B cell (primary cell): ENCODE measurements at regions of chr1 and their contacts with region 1.

Region 1: DNA sequence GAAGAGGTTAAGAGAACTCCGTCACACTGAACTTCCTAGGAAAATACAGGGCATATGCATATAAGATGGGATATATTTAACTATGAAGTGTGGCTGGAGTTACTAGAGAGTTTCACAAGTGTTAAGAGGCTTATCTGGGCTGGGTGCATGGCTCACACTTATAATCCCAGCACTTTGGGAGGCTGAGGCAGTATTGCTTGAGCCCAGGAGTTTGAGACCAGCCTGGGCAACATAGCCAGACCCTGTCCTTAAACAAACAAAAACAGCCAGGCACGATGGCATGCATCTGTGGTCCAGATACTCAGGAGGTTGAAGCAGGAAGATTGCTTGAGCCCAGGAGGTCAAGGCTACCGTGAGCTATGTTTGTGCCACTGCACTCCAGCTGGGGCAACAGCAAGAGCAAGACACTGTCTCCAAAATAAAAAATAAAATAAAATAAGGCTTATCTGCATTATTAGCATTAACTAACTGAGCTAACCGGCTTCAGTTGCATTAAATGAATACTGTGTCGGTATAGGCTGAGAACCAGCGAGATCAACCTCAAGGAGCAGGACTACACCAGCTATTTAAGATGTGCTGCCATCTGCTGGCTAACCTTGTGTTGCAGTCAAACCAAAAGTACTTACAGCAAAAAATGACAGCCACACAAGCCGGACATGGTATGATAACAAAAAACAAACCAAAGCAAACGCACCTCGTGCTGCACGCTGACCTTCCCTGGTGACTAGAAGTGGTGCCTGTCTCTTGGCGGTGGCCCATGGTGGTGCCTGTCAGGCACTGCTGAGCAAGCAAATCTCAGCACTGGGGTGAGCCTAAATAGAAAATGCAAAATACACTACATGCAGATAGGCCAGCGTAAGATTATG is 19.7 kb upstream of the RBBP5 start:
- DNase-seq: peak; percentile 85
- ATAC-seq: peak; percentile 85
- H3K4me3 ChIP-seq: no peak overlapping the region
- H3K4me3 Mint-ChIP-seq: peak overlapping the region; percentile 50
- H3K27ac ChIP-seq: no peak overlapping the region
- H3K27ac Mint-ChIP-seq: no peak overlapping the region
- H3K4me1 ChIP-seq: peaks cover 15 to 23% of the 10 kb centered on the region in 2 donors
- H3K4me1 Mint-ChIP-seq: peaks cover 28% of the 10 kb centered on the region
- H3K27me3 ChIP-seq: no peaks in the 10 kb centered on the region
- H3K27me3 Mint-ChIP-seq: no peaks in the 10 kb centered on the region
- CTCF ChIP-seq: peak; percentile 85

Region 2: DNA sequence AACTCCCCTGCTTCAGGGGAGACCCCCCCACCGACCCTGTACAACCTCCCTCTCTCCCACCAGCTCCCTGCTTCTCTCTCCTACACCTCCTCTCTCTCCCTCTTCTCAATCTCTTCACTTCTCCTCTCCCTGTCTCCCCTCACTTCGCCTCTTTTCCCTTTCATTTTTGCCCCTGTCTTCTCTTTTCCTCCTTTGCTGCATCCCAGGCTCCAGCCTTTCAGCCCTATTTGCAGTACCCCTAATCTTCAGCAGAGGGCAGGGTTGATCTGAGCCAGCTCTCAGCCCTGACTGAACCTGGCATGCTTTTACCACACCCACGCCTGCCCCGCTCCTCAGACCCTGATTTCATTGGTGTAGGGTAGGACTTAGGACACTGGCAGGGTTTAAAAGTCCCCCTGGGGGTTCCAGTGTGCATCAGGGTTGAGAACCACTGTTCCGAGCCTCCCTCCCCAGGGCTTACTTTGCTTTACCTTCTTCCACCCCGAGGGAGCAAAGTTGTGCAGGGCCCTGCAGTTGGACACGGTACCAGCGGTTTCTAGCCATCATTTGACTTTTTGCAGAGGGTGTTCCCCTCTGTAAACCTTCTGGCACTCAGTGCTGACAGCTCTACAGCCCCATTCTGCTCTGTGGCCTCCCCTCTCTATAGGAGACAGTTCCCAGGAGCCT is 165.8 kb before region 1 on chr1:
- CTCF ChIA-PET with region 1: interaction called, 22 read pairs
- POLR2A ChIA-PET with region 1: no interaction called
- intact Hi-C with region 1: no loop called
- DNase-seq: peak; percentile 75
- ATAC-seq: peak; percentile 90
- H3K4me3 ChIP-seq: no peak overlapping the region
- H3K4me3 Mint-ChIP-seq: no peak overlapping the region
- H3K27ac ChIP-seq: no peak overlapping the region
- H3K27ac Mint-ChIP-seq: no peak overlapping the region
- H3K4me1 ChIP-seq: peaks cover 18 to 25% of the 10 kb centered on the region in 2 donors
- H3K4me1 Mint-ChIP-seq: peaks cover 14% of the 10 kb centered on the region
- H3K27me3 ChIP-seq: peaks cover 0 to 16% (median 7%) of the 10 kb centered on the region in 4 experiments
- H3K27me3 Mint-ChIP-seq: peaks cover 18% of the 10 kb centered on the region
- CTCF ChIP-seq: peak; percentile 91

Region 3: GRCh38 chr1:204989266-204990058 is 152.0 kb before region 1 on chr1:
- CTCF ChIA-PET with region 1: interaction called, 25 read pairs
- POLR2A ChIA-PET with region 1: no interaction called
- intact Hi-C with region 1: no loop called
- DNase-seq: peak; percentile 77
- ATAC-seq: peak; percentile 71
- H3K4me3 ChIP-seq: no peak overlapping the region
- H3K4me3 Mint-ChIP-seq: no peak overlapping the region
- H3K27ac ChIP-seq: no peak overlapping the region
- H3K27ac Mint-ChIP-seq: no peak overlapping the region
- H3K4me1 ChIP-seq: peaks cover 15 to 21% of the 10 kb centered on the region in 2 donors
- H3K4me1 Mint-ChIP-seq: peaks cover 22% of the 10 kb centered on the region
- H3K27me3 ChIP-seq: peaks cover 0 to 2% (median 0%) of the 10 kb centered on the region in 4 experiments
- H3K27me3 Mint-ChIP-seq: peaks cover 5% of the 10 kb centered on the region
- CTCF ChIP-seq: peak; percentile 81

Region 4: DNA sequence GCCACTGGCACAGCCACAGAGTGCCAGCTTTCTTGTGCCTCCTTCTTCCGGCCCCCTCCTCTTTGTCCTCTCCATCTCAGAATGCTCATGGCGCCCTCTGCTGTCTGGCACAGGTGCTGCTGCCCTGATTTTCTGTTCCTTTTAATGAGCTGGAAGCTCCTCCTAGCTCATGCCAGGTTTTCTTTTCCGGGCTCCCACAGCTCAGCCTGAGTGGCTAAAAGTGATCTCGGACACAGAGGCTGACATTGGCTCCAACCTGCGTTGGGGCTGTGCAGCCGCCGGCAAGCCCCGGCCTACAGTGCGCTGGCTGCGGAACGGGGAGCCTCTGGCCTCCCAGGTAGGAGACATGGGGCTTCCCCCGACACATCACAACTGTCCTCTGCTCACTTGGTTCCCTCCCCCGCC is 79.8 kb before region 1 on chr1:
- CTCF ChIA-PET with region 1: interaction called, 12 read pairs
- POLR2A ChIA-PET with region 1: no interaction called
- intact Hi-C with region 1: no loop called
- DNase-seq: peak; percentile 77
- ATAC-seq: peak; percentile 62
- H3K4me3 ChIP-seq: no peak overlapping the region
- H3K4me3 Mint-ChIP-seq: no peak overlapping the region
- H3K27ac ChIP-seq: no peak overlapping the region
- H3K27ac Mint-ChIP-seq: no peak overlapping the region
- H3K4me1 ChIP-seq: peaks cover 0 to 6% of the 10 kb centered on the region in 2 donors
- H3K4me1 Mint-ChIP-seq: no peaks in the 10 kb centered on the region
- H3K27me3 ChIP-seq: no peaks in the 10 kb centered on the region
- H3K27me3 Mint-ChIP-seq: no peaks in the 10 kb centered on the region
- CTCF ChIP-seq: peak; percentile 80

Region 5: DNA sequence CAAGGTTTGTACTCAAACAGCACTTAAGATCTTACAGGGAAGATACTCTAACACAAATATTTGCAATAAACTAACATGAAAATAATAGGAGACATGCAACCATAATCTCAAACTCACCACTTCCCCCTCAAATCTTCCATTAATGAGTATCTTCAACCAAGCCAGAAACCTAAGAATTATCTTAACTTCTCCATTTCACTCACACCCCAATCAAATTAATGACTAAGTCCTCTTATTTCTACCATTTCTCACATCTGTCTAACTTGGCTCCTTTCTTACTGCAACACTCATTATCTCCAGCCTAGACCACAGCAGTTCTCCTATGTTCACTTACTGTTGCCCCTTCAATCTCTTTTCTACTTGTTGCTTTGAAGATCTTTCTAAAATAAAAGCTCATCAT is 30.1 kb before region 1 on chr1:
- CTCF ChIA-PET with region 1: interaction called, 23 read pairs
- POLR2A ChIA-PET with region 1: no interaction called
- intact Hi-C with region 1: no loop called
- DNase-seq: peak; percentile 22
- ATAC-seq: no peak
- H3K4me3 ChIP-seq: no peak overlapping the region
- H3K4me3 Mint-ChIP-seq: no peak overlapping the region
- H3K27ac ChIP-seq: peak overlapping the region in 1 of 2 donors; percentile 31
- H3K27ac Mint-ChIP-seq: peak overlapping the region; percentile 27
- H3K4me1 ChIP-seq: peaks cover 6 to 20% of the 10 kb centered on the region in 2 donors
- H3K4me1 Mint-ChIP-seq: peaks cover 22% of the 10 kb centered on the region
- H3K27me3 ChIP-seq: no peaks in the 10 kb centered on the region
- H3K27me3 Mint-ChIP-seq: no peaks in the 10 kb centered on the region
- CTCF ChIP-seq: no peak

Region 6: DNA sequence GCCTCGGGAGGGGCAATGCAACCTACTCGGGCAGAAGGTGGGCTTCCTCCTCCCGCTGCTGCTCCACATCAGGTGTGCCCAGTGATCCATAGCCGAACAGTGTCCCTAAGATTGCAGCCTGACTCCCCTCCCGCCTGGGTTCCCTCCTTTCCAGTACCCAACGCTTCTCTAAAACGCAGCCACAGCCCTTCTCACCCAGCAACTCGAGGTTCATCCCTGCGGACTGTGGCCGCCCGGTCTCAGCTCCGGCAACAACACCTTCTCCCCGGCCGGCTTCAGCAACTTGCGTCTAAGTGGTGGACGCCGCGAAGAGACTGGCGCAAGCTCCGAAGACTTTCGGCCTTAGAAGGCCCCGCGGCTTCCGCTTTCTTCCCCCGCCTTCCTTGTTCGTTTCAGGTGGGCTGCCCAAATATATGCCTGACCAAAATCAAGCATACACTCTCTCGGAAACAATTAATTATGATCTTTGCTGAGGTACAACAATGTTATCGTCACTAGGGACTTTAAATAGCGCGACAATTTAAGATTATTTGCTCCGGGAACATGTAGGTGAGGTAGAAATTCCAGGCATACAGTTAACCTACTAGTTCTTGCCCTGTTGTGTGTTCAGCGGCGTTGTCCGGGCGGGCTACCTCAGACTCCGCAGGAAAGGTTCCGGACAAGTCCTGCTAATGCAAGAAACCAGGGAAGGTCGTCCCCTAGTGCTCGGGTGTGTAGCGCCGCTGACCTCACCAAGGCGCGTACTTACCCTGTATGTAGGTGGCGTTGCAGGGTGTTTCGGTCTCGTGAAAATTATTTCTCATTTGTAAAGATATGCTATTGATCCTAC is 19.6 kb before region 1 on chr1 and contains the start of gene RBBP5:
- CTCF ChIA-PET with region 1: interaction called, 86 read pairs
- POLR2A ChIA-PET with region 1: interaction called, 12 read pairs
- intact Hi-C with region 1: loop called (anchors 1 kb)
- DNase-seq: peak; percentile 99
- ATAC-seq: peak; percentile 93
- H3K4me3 ChIP-seq: peak within 1 kb of the TSS; percentile 74 to 99 (median 87)
- H3K4me3 Mint-ChIP-seq: peak within 1 kb of the TSS; percentile 98
- H3K27ac ChIP-seq: peak within 1 kb of the TSS; percentile 95 to 96
- H3K27ac Mint-ChIP-seq: peak within 1 kb of the TSS; percentile 100
- H3K4me1 ChIP-seq: peaks cover 31 to 40% of the 10 kb centered on the region in 2 donors
- H3K4me1 Mint-ChIP-seq: peaks cover 48% of the 10 kb centered on the region
- H3K27me3 ChIP-seq: no peaks in the 10 kb centered on the region
- H3K27me3 Mint-ChIP-seq: no peaks in the 10 kb centered on the region
- CTCF ChIP-seq: peak; percentile 73
- total RNA-seq, gene RBBP5: 18.5 and 31.7 TPM in 2 replicates

Region 7: GRCh38 chr1:205129447-205130029 is 11.9 kb before region 1 on chr1:
- CTCF ChIA-PET with region 1: interaction called, 86 read pairs
- POLR2A ChIA-PET with region 1: interaction called, 5 read pairs
- intact Hi-C with region 1: no loop called
- DNase-seq: no peak
- ATAC-seq: no peak
- H3K4me3 ChIP-seq: no peak overlapping the region
- H3K4me3 Mint-ChIP-seq: no peak overlapping the region
- H3K27ac ChIP-seq: no peak overlapping the region
- H3K27ac Mint-ChIP-seq: no peak overlapping the region
- H3K4me1 ChIP-seq: peaks cover 14 to 21% of the 10 kb centered on the region in 2 donors
- H3K4me1 Mint-ChIP-seq: peaks cover 16% of the 10 kb centered on the region
- H3K27me3 ChIP-seq: no peaks in the 10 kb centered on the region
- H3K27me3 Mint-ChIP-seq: no peaks in the 10 kb centered on the region
- CTCF ChIP-seq: no peak

Region 8: DNA sequence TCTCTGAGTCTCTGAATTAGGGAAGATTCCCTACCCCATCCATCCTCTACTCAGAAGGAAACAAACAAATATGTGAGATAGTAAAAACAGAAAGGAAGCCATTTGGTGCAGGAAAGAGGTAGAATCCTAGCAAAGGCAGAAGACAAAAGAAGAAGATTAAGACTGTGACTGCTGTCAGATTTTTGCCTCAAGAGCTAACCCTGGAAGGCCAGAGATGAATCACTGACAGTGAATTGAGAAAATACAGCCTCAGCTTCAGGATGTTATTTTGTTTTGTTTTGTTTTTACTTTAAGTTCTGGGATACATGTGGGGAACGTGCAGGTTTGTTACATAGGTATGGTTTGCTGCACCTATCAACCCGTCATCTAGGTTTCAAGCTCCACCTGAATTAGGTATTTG is 38.4 kb after region 1 on chr1:
- CTCF ChIA-PET with region 1: no interaction called
- POLR2A ChIA-PET with region 1: no interaction called
- intact Hi-C with region 1: no loop called
- DNase-seq: no peak
- ATAC-seq: no peak
- H3K4me3 ChIP-seq: no peak overlapping the region
- H3K4me3 Mint-ChIP-seq: no peak overlapping the region
- H3K27ac ChIP-seq: no peak overlapping the region
- H3K27ac Mint-ChIP-seq: no peak overlapping the region
- H3K4me1 ChIP-seq: no peaks in the 10 kb centered on the region
- H3K4me1 Mint-ChIP-seq: no peaks in the 10 kb centered on the region
- H3K27me3 ChIP-seq: no peaks in the 10 kb centered on the region
- H3K27me3 Mint-ChIP-seq: no peaks in the 10 kb centered on the region
- CTCF ChIP-seq: no peak

Region 9: DNA sequence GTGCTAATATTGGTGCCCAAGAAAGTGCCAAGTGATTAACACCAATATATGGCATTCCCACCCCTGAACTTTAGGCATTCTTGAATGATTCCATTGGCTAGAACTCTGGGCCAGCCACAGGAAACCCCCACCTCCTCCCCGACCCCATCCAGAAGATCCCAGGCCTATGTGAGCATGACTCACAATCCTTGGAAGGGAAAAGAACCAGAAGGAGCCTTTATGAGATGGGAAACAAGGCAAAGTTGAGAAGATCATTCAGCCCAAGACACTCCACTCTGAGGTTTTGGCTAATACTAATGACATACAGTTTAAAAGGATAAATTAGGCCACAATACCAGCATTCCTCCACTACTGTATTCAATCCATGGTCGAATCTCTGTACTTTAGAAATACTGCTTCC is 468.6 kb after region 1 on chr1:
- CTCF ChIA-PET with region 1: no interaction called
- POLR2A ChIA-PET with region 1: no interaction called
- intact Hi-C with region 1: no loop called
- DNase-seq: no peak
- ATAC-seq: no peak
- H3K4me3 ChIP-seq: no peak overlapping the region
- H3K4me3 Mint-ChIP-seq: no peak overlapping the region
- H3K27ac ChIP-seq: no peak overlapping the region
- H3K27ac Mint-ChIP-seq: no peak overlapping the region
- H3K4me1 ChIP-seq: peaks cover 4 to 9% of the 10 kb centered on the region in 2 donors
- H3K4me1 Mint-ChIP-seq: peaks cover 29% of the 10 kb centered on the region
- H3K27me3 ChIP-seq: no peaks in the 10 kb centered on the region
- H3K27me3 Mint-ChIP-seq: no peaks in the 10 kb centered on the region
- CTCF ChIP-seq: no peak